Caco-2 (cell line): ENCODE measurements at regions of chr6 and their contacts with region 1.

Region 1: GRCh38 chr6:165636402-165637048 is 26.5 kb downstream of the PDE10A start:
- DNase-seq: no peak
- H3K4me3 ChIP-seq: no peak overlapping the region
- H3K4me3 Mint-ChIP-seq: no peak overlapping the region
- H3K27ac Mint-ChIP-seq: peak overlapping the region; percentile 20
- H3K4me1 ChIP-seq: 0 out of 2 replicates have a peak, but pooled peaks cover 11% of the 10 kb centered on the region
- H3K4me1 Mint-ChIP-seq: peaks cover 20% of the 10 kb centered on the region
- H3K27me3 ChIP-seq: peaks cover 1% of the 10 kb centered on the region; the same call in 1 of the 2 replicates
- H3K27me3 Mint-ChIP-seq: no peaks in the 10 kb centered on the region
- CTCF ChIP-seq: no peak

Region 2: DNA sequence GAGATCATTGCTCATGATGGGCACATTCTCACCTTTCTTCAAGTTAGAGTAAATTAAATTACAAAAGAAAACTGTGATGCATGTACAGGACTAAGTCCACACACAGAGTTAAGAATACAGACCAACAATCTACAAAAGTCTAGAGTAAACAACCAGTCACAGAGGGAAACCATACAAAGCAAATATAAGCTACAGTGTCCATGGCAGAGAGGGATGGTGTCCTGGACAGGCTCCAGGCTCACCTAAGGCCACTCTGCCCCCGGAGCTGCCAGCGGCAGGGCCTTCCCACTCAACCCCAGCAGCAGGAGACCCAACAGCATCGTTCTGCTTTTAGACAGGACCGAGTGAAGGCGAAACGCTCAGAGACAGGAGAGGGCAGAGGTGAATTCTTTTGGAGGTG is 10.5 kb after region 1 on chr6:
- CTCF ChIA-PET with region 1: interaction called, 11 read pairs
- POLR2A ChIA-PET with region 1: no interaction called
- intact Hi-C with region 1: no loop called
- DNase-seq: no peak
- H3K4me3 ChIP-seq: no peak overlapping the region
- H3K4me3 Mint-ChIP-seq: no peak overlapping the region
- H3K27ac Mint-ChIP-seq: no peak overlapping the region
- H3K4me1 ChIP-seq: no peaks in the 10 kb centered on the region
- H3K4me1 Mint-ChIP-seq: peaks cover 4% of the 10 kb centered on the region
- H3K27me3 ChIP-seq: no peaks in the 10 kb centered on the region
- H3K27me3 Mint-ChIP-seq: no peaks in the 10 kb centered on the region
- CTCF ChIP-seq: no peak

Region 3: GRCh38 chr6:165662749-165663282 is 26.3 kb after region 1 on chr6 and contains the start of gene PDE10A:
- CTCF ChIA-PET with region 1: no interaction called
- POLR2A ChIA-PET with region 1: no interaction called
- intact Hi-C with region 1: no loop called
- DNase-seq: peak; percentile 53 to 58
- H3K4me3 ChIP-seq: peak within 1 kb of the TSS; percentile 47
- H3K4me3 Mint-ChIP-seq: peak within 1 kb of the TSS; percentile 73
- H3K27ac Mint-ChIP-seq: no peak within 1 kb of the TSS
- H3K4me1 ChIP-seq: peaks cover 11% of the 10 kb centered on the region; the same call in 1 of the 2 replicates
- H3K4me1 Mint-ChIP-seq: peaks cover 25% of the 10 kb centered on the region
- H3K27me3 ChIP-seq: 0 out of 2 replicates have a peak, but pooled peaks cover 2% of the 10 kb centered on the region
- H3K27me3 Mint-ChIP-seq: peaks cover 23% of the 10 kb centered on the region
- CTCF ChIP-seq: no peak
- total RNA-seq, gene PDE10A: 3.4 and 3.6 TPM in 2 replicates

Region 4: GRCh38 chr6:165850434-165851019 is 214.0 kb after region 1 on chr6:
- CTCF ChIA-PET with region 1: no interaction called
- POLR2A ChIA-PET with region 1: no interaction called
- intact Hi-C with region 1: loop called (anchors 10 kb)
- DNase-seq: peak; percentile 59 to 73
- H3K4me3 ChIP-seq: no peak overlapping the region
- H3K4me3 Mint-ChIP-seq: no peak overlapping the region
- H3K27ac Mint-ChIP-seq: no peak overlapping the region
- H3K4me1 ChIP-seq: no peaks in the 10 kb centered on the region
- H3K4me1 Mint-ChIP-seq: no peaks in the 10 kb centered on the region
- H3K27me3 ChIP-seq: no peaks in the 10 kb centered on the region
- H3K27me3 Mint-ChIP-seq: peaks cover 6% of the 10 kb centered on the region
- CTCF ChIP-seq: peak; percentile 78 to 96

Region 5: GRCh38 chr6:165920896-165921671 is 284.6 kb after region 1 on chr6:
- CTCF ChIA-PET with region 1: no interaction called
- POLR2A ChIA-PET with region 1: no interaction called
- intact Hi-C with region 1: no loop called
- DNase-seq: no peak
- H3K4me3 ChIP-seq: no peak overlapping the region
- H3K4me3 Mint-ChIP-seq: no peak overlapping the region
- H3K27ac Mint-ChIP-seq: no peak overlapping the region
- H3K4me1 ChIP-seq: no peaks in the 10 kb centered on the region
- H3K4me1 Mint-ChIP-seq: no peaks in the 10 kb centered on the region
- H3K27me3 ChIP-seq: no peaks in the 10 kb centered on the region
- H3K27me3 Mint-ChIP-seq: peaks cover 6% of the 10 kb centered on the region
- CTCF ChIP-seq: no peak